Right cardiac atrium (tissue), 5 donors: ENCODE measurements at regions of chr14 and their contacts with region 1.

Region 1: DNA sequence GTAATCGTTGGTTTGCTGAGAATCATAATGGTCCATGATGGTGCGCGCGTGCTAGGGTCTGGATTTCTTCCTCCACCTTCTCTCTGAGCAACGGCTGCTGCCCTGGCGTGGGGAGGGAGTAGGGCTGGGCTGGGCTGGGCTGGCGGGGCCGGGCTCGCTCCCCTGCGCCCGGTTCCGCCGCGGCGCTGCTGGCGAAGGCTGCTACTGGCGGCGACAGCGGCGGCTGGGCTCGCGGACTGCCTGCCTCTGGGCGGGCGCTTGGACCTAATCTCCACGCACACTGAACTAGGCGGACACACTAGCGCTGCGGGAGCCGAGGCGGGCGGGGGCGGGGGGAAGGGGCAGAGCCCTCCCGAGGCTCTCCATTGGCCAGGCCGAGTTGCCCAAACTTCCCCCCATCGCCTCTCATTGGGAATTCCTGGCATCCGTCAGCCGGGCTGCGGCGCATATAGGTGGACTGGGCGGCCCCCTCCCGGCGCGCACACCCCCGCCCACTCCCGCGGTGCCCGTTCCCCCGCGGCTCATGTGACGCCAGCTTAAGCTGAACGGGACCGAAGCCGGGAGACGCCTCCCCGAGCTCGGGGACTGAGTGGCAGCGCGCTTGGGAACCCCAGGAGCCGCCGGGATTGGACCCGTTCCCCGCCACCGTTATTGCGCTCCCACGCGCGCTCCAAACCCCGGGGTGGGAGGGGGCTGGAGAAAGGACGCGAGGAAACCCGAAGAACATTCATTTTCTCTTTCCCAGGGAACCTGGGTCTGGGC is at the start of gene ACTN1:
- DNase-seq: peak; percentile 96 to 97 (median 97)
- ATAC-seq: peak; percentile 89 to 90
- H3K4me3 ChIP-seq: peak within 1 kb of the TSS; percentile 92
- H3K27ac ChIP-seq: peak within 1 kb of the TSS; percentile 99
- H3K4me1 ChIP-seq: peaks cover 19% of the 10 kb centered on the region
- H3K27me3 ChIP-seq: no peaks in the 10 kb centered on the region
- total RNA-seq, gene ACTN1: 133 to 305 (median 171) TPM

Region 2: GRCh38 chr14:68939893-68940613 is 39.1 kb before region 1 on chr14:
- intact Hi-C with region 1: loop called in 3 of 4 experiments (anchors 5 kb)
- DNase-seq: peak; percentile 90 to 93 (median 93)
- ATAC-seq: peak; percentile 80 to 86
- H3K4me3 ChIP-seq: no peak overlapping the region
- H3K27ac ChIP-seq: peak overlapping the region; percentile 75
- H3K4me1 ChIP-seq: peaks cover 54% of the 10 kb centered on the region
- H3K27me3 ChIP-seq: no peaks in the 10 kb centered on the region